Activated CD4-positive, alpha-beta memory T cell treated with anti-CD3 and anti-CD28 coated beads, Interleukin-2, amount 10 ng/mL, durations not matched to agents 7 days and 5 days (primary cell): ENCODE measurements at regions of chr10 and their contacts with region 1.

Region 1: GRCh38 chr10:95374597-95375209 is 83.9 kb upstream of the PDLIM1 start:
- DNase-seq: peak; percentile 76
- H3K4me3 Mint-ChIP-seq: no peak overlapping the region
- H3K27ac Mint-ChIP-seq: no peak overlapping the region
- H3K4me1 Mint-ChIP-seq: peaks cover 5% of the 10 kb centered on the region
- H3K27me3 Mint-ChIP-seq: peaks cover 32% of the 10 kb centered on the region

Region 2: GRCh38 chr10:95319239-95319638 is 55.5 kb before region 1 on chr10:
- CTCF ChIA-PET with region 1: no interaction called
- POLR2A ChIA-PET with region 1: no interaction called
- DNase-seq: no peak
- H3K4me3 Mint-ChIP-seq: no peak overlapping the region
- H3K27ac Mint-ChIP-seq: no peak overlapping the region
- H3K4me1 Mint-ChIP-seq: no peaks in the 10 kb centered on the region
- H3K27me3 Mint-ChIP-seq: peaks cover 2% of the 10 kb centered on the region

Region 3: DNA sequence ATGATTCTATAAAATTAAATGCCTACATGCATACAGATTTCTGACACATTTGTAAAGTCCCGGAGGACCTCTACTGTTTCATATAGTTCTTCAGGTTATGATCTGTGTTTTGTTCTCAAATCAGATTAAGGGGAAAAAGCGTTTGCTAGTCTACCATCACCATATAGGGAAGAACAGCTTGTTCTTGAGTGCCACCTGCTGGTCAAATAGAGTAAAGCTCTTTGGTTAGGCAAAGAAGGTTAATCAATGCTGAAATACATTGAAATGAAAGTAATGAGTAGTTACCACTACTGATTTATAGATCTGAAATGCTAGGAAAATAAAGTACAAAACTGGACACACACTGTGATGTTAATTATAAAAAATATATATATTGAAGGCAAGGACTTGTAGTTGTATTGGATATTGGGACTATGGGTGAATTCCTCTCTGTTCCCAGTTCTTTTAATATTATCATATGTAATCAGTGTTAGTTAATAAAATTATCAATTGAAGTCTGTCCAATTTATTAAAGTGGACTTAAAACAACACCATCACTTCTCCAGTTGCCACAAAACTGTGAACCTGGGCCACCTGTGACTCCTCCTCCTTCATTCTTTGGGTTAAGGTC is 11.3 kb before region 1 on chr10:
- CTCF ChIA-PET with region 1: interaction called, 82 read pairs
- POLR2A ChIA-PET with region 1: no interaction called
- DNase-seq: peak; percentile 50
- H3K4me3 Mint-ChIP-seq: no peak overlapping the region
- H3K27ac Mint-ChIP-seq: no peak overlapping the region
- H3K4me1 Mint-ChIP-seq: no peaks in the 10 kb centered on the region
- H3K27me3 Mint-ChIP-seq: peaks cover 8% of the 10 kb centered on the region

Region 4: GRCh38 chr10:95397747-95398146 is 23.0 kb after region 1 on chr10:
- CTCF ChIA-PET with region 1: interaction called, 11 read pairs
- POLR2A ChIA-PET with region 1: no interaction called
- DNase-seq: no peak
- H3K4me3 Mint-ChIP-seq: no peak overlapping the region
- H3K27ac Mint-ChIP-seq: no peak overlapping the region
- H3K4me1 Mint-ChIP-seq: peaks cover 11% of the 10 kb centered on the region
- H3K27me3 Mint-ChIP-seq: no peaks in the 10 kb centered on the region

Region 5: DNA sequence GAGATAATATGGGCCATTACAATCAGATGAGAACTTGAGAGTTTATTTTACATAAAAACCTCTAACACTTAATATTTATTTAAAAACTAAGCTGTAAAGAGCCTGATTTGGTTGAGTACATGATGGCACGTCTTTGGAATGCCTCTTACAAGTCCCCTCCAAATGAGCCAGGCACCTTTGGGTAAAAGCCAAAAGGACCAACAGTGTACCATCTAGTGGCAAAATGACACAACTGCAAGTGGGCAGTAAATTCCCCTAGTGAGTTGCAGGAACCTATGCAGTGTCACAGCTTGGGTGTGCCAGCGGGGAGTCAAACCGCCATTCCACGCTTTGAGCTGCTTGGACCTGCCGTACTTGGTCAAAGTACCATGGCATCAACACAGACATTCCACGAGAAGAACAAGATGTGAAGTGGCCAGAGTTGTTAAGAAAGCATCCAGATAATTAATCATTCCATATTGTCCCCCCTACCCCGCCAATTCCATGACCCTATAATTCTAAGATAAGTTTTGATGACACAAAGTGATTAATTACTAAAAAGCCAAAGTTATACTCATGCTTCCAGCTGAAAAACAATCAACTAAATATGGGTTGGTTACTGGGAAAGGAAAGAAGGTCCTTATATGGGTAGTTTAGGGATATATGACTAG is 71.3 kb after region 1 on chr10:
- CTCF ChIA-PET with region 1: interaction called, 20 read pairs
- POLR2A ChIA-PET with region 1: interaction called, 3 read pairs
- DNase-seq: peak; percentile 29
- H3K4me3 Mint-ChIP-seq: no peak overlapping the region
- H3K27ac Mint-ChIP-seq: no peak overlapping the region
- H3K4me1 Mint-ChIP-seq: peaks cover 8% of the 10 kb centered on the region
- H3K27me3 Mint-ChIP-seq: peaks cover 18% of the 10 kb centered on the region

Region 6: GRCh38 chr10:95544783-95545500 is 170.2 kb after region 1 on chr10:
- CTCF ChIA-PET with region 1: no interaction called
- POLR2A ChIA-PET with region 1: no interaction called
- DNase-seq: no peak
- H3K4me3 Mint-ChIP-seq: no peak overlapping the region
- H3K27ac Mint-ChIP-seq: no peak overlapping the region
- H3K4me1 Mint-ChIP-seq: no peaks in the 10 kb centered on the region
- H3K27me3 Mint-ChIP-seq: peaks cover 3% of the 10 kb centered on the region